Endothelial cell of umbilical vein (primary cell): ENCODE measurements at regions of chr5 and their contacts with region 1.

Region 1: GRCh38 chr5:68215208-68215897 is at the start of gene PIK3R1:
- DNase-seq: peak; percentile 96
- H3K4me3 ChIP-seq: peak within 1 kb of the TSS; percentile 52 to 91 (median 91)
- H3K27ac ChIP-seq: peak within 1 kb of the TSS; percentile 93
- H3K4me1 ChIP-seq: peaks cover 17% of the 10 kb centered on the region
- H3K27me3 ChIP-seq: no peaks in the 10 kb centered on the region
- CTCF ChIP-seq: peak; percentile 32 to 49
- POLR2A ChIP-seq: peak; percentile 93
- total RNA-seq, gene PIK3R1: 27.5 and 30.0 TPM in 2 replicates

Region 2: DNA sequence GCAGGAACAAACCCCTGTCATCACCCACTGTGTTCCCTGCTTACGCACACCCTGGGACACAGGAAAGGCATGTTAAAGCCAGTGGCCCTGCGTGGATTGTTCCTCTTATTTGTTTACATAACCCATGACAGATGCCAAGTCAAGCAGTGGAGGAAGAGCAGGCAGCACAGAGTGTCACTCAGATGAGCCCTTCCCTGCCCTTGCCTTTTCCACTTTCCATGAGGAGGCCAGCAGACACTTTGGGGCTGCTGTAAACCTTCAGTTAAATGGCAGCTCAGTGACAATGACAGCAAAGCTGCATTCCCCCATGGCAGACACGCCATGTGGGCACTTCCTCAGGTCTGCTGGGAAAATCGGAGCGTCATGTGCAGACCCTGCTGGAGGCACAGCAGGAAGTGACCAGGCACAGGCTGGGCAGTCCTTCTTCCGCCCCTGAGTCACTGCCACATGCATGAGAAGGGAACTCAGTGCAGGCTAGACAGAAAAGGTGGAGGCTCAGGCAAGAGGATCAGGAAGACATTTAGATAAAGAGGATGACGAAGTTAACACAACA is 216.6 kb before region 1 on chr5:
- CTCF ChIA-PET with region 1: interaction called, 5 read pairs
- POLR2A ChIA-PET with region 1: no interaction called
- dilution Hi-C with region 1: no loop called
- intact Hi-C with region 1: loop called (anchors 1 kb)
- DNase-seq: peak; percentile 82
- H3K4me3 ChIP-seq: no peak overlapping the region
- H3K27ac ChIP-seq: peak overlapping the region; percentile 85
- H3K4me1 ChIP-seq: peaks cover 14% of the 10 kb centered on the region
- H3K27me3 ChIP-seq: no peaks in the 10 kb centered on the region
- CTCF ChIP-seq: no peak
- POLR2A ChIP-seq: peak; percentile 23

Region 3: DNA sequence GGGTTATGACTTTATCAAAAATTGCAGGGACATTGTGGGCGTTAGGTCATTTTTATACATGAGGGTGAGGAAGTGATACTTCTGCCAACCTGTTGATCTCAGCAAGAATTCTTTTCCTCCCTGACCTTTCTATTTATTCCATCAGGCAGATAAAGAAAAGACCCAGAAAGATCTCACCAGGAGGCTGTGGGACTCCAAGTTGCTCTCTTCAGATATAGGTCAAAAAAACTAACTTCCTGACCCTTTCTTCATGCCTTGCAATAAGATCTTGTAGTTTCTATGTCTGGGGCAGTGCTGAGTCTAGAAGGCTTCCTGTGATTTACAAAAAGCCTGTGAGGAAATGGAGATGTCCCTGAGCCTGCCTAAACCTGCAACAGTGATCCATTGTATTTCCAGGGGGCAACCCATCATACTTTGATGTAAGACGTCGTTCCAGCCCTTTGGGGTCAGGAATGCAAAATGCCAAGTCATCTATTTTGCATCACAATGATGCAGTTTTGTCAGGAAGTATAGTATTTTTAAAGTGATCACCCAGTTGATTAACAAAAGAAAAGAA is 21.8 kb before region 1 on chr5:
- CTCF ChIA-PET with region 1: interaction called, 4 read pairs
- POLR2A ChIA-PET with region 1: interaction called, 4 read pairs
- dilution Hi-C with region 1: no loop called
- intact Hi-C with region 1: loop called (anchors 2 kb)
- DNase-seq: peak; percentile 12
- H3K4me3 ChIP-seq: no peak overlapping the region
- H3K27ac ChIP-seq: no peak overlapping the region
- H3K4me1 ChIP-seq: peaks cover 25% of the 10 kb centered on the region
- H3K27me3 ChIP-seq: no peaks in the 10 kb centered on the region
- CTCF ChIP-seq: no peak
- POLR2A ChIP-seq: no peak

Region 4: GRCh38 chr5:68246802-68247201 is 31.4 kb after region 1 on chr5:
- CTCF ChIA-PET with region 1: interaction called, 66 read pairs
- POLR2A ChIA-PET with region 1: interaction called, 9 read pairs
- dilution Hi-C with region 1: no loop called
- intact Hi-C with region 1: loop called (anchors 1 kb)
- DNase-seq: no peak
- H3K4me3 ChIP-seq: no peak overlapping the region
- H3K27ac ChIP-seq: no peak overlapping the region
- H3K4me1 ChIP-seq: peaks cover 81% of the 10 kb centered on the region
- H3K27me3 ChIP-seq: no peaks in the 10 kb centered on the region
- CTCF ChIP-seq: no peak
- POLR2A ChIP-seq: no peak